ENCODE measurements at regions of chr6 and their contacts with region 1.

Region 1: GRCh38 chr6:157274471-157275226 is 48.7 kb downstream of the TMEM242 start:
- DNase-seq: peak; percentile 94

Region 2: DNA sequence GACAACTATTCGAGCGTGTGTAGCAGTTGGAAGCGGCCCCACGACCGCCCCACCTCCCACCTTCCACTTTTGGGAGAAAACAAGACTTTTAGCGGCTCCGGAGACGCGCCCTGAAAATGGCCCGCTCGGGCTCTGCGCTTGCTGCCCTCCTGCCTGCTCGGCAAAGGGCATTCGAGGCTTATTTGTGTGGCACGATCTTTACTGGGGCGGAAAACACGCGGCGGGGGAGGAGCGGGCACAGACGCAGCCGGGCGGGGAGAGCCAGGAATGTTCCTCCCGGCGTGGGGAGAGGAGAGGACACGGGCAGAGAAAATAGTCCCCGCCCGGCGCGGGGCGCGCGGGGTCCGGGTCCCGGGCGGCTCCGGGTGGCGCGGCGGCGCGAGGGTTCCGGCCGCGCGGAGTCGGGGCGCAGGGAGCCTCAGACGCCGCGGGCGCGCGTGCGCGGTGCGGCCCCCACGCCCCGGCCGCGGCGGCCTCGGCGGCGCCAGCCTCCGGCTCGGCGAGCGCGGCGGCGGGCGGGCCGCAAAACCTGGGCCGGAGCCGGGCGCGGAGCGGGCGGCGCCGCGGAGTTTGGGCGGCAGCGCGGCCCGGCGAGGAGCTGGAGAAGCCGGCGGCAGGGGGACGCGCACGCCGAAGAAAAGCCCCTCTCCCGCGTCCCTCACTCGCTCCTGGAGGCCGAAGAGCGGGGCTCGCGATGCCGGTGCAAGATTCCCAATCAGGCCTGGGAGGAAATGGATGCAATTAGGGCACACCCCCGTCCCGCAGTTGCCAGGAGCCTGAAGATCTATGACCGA is 587.5 kb before region 1 on chr6:
- intact Hi-C with region 1: loop called in 1 of 2 experiments (anchors 10 kb)
- DNase-seq: peak; percentile 96

Region 3: GRCh38 chr6:157034436-157035230 is 240.0 kb before region 1 on chr6:
- intact Hi-C with region 1: loop called in 1 of 2 experiments (anchors 10 kb)
- DNase-seq: no peak

Region 4: GRCh38 chr6:157227202-157228166 is 47.2 kb before region 1 on chr6:
- intact Hi-C with region 1: loop called in 1 of 2 experiments (anchors 5 kb)
- DNase-seq: no peak

Region 5: GRCh38 chr6:157235600-157236039 is 39.0 kb before region 1 on chr6:
- intact Hi-C with region 1: loop called (anchors 5 kb)
- DNase-seq: peak; percentile 90

Region 6: DNA sequence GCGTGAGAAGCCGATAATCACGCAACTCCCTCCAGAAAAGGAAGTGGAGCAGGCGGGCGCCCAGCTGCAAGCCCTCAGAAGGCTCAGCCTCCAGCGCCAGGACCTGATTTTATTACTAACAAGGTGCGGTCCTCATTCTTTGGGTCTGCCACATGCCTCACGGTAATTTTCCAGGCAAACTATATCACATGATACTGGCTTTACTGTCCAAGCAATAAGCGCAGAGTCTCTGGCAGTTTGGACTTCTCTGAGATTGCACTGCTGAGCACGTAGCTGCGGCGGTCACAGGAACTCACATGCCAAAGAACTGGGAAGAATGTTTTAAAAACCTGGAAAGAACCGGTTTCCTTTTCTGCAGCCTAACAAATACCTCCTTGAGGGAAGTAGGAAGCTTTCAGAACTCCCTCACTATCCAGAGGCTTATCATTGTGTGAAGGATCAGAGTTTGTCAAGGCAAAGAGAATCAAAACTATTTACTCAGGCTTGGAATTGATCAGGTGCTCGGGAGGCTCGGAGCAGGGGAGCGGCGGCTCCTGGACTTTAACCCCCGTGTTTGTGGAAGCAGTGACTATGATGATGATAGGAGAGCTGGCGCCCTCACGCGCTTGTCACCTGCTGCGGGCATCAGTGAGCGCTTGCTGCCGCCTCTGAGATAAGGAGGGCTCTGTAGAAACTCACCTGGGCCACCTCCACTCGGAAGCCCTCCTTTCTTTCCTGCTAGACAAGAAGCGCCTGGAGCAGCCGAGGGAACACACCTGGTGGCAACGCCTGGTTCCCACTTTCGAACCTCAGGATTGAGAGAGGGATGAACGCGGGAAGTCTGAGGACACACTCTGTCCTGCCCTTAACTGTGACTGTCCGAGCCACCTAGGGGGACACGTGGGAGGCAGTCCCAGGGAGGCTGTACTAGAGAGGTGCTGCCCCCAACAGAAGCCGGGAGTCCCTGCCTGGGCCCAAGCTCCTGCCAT is 679.8 kb after region 1 on chr6:
- intact Hi-C with region 1: no loop called
- DNase-seq: no peak